ENCODE measurements at regions of chr2 and their contacts with region 1.

Region 1: GRCh38 chr2:74507145-74507925 is at the start of gene PCGF1:
- DNase-seq: peak; percentile 97
- H3K4me3 ChIP-seq: peak within 1 kb of the TSS; percentile 64
- H3K27ac ChIP-seq: peak within 1 kb of the TSS; percentile 73
- H3K4me1 ChIP-seq: peaks cover 26% of the 10 kb centered on the region
- H3K27me3 ChIP-seq: no peaks in the 10 kb centered on the region
- CTCF ChIP-seq: peak; percentile 54
- total RNA-seq, gene PCGF1: 24.9 and 31.3 TPM in 2 replicates

Region 2: GRCh38 chr2:74119912-74120825 is 387.2 kb before region 1 on chr2:
- CTCF ChIA-PET with region 1: interaction called, 11 read pairs
- POLR2A ChIA-PET with region 1: no interaction called
- intact Hi-C with region 1: no loop called
- DNase-seq: peak; percentile 69 to 85
- H3K4me3 ChIP-seq: peak overlapping the region; percentile 89
- H3K27ac ChIP-seq: peak overlapping the region; percentile 75
- H3K4me1 ChIP-seq: peaks cover 9% of the 10 kb centered on the region; the same call in 1 of the 2 replicates
- H3K27me3 ChIP-seq: no peaks in the 10 kb centered on the region
- CTCF ChIP-seq: peak; percentile 69

Region 3: GRCh38 chr2:74458132-74458925 is 49.0 kb before region 1 on chr2 and contains the start of gene WBP1:
- CTCF ChIA-PET with region 1: no interaction called
- POLR2A ChIA-PET with region 1: no interaction called
- intact Hi-C with region 1: loop called (anchors 2 kb)
- DNase-seq: peak; percentile 99 to 100
- H3K4me3 ChIP-seq: peak within 1 kb of the TSS; percentile 93
- H3K27ac ChIP-seq: peak within 1 kb of the TSS; percentile 29; the same call in 1 of the 2 replicates
- H3K4me1 ChIP-seq: peaks cover 22% of the 10 kb centered on the region
- H3K27me3 ChIP-seq: no peaks in the 10 kb centered on the region
- CTCF ChIP-seq: no peak
- total RNA-seq, gene WBP1: 68.0 and 74.7 TPM in 2 replicates

Region 4: GRCh38 chr2:74529357-74530238 is 22.3 kb after region 1 on chr2 and contains the starts of genes AUP1 and HTRA2:
- CTCF ChIA-PET with region 1: interaction called, 4 read pairs
- POLR2A ChIA-PET with region 1: interaction called, 3 read pairs
- intact Hi-C with region 1: loop called (anchors 1 kb)
- DNase-seq: peak; percentile 97 to 98
- H3K4me3 ChIP-seq: peak within 1 kb of the TSS; percentile 93
- H3K27ac ChIP-seq: peak within 1 kb of the TSS; percentile 48
- H3K4me1 ChIP-seq: peaks cover 18% of the 10 kb centered on the region
- H3K27me3 ChIP-seq: no peaks in the 10 kb centered on the region
- CTCF ChIP-seq: no peak
- total RNA-seq, gene AUP1: 79.2 and 84.0 TPM in 2 replicates
- total RNA-seq, gene HTRA2: 23.2 and 23.5 TPM in 2 replicates

Region 5: GRCh38 chr2:74845217-74846011 is 338.1 kb after region 1 on chr2:
- CTCF ChIA-PET with region 1: no interaction called
- POLR2A ChIA-PET with region 1: no interaction called
- intact Hi-C with region 1: loop called (anchors 10 kb)
- DNase-seq: peak; percentile 91 to 99
- H3K4me3 ChIP-seq: peak overlapping the region; percentile 37; the same call in 1 of the 2 replicates
- H3K27ac ChIP-seq: peak overlapping the region; percentile 98
- H3K4me1 ChIP-seq: peaks cover 94% of the 10 kb centered on the region
- H3K27me3 ChIP-seq: no peaks in the 10 kb centered on the region
- CTCF ChIP-seq: no peak

Region 6: DNA sequence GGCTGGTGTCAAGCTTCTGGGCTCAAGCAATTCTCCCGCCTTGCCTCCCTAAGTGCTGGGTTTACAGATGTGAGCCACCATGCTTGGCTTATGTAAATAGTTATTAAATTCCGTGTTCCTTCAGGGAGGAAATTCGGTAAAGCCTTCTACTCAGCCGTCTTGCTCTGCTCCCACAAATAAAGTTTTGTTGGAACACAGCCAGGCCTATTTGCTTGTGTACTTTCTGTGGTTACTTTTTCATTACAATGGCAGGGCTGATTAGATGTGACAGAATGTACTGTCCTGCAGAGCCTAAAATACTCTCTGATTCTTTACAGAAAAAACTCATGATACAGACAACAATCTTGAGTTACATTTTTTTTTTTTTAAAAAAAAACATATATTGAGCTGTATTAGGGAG is 760.8 kb after region 1 on chr2:
- CTCF ChIA-PET with region 1: no interaction called
- POLR2A ChIA-PET with region 1: no interaction called
- intact Hi-C with region 1: no loop called
- DNase-seq: no peak
- H3K4me3 ChIP-seq: no peak overlapping the region
- H3K27ac ChIP-seq: no peak overlapping the region
- H3K4me1 ChIP-seq: no peaks in the 10 kb centered on the region
- H3K27me3 ChIP-seq: no peaks in the 10 kb centered on the region
- CTCF ChIP-seq: no peak